ENCODE measurements at regions of chr2 and their contacts with region 1.

Region 1: DNA sequence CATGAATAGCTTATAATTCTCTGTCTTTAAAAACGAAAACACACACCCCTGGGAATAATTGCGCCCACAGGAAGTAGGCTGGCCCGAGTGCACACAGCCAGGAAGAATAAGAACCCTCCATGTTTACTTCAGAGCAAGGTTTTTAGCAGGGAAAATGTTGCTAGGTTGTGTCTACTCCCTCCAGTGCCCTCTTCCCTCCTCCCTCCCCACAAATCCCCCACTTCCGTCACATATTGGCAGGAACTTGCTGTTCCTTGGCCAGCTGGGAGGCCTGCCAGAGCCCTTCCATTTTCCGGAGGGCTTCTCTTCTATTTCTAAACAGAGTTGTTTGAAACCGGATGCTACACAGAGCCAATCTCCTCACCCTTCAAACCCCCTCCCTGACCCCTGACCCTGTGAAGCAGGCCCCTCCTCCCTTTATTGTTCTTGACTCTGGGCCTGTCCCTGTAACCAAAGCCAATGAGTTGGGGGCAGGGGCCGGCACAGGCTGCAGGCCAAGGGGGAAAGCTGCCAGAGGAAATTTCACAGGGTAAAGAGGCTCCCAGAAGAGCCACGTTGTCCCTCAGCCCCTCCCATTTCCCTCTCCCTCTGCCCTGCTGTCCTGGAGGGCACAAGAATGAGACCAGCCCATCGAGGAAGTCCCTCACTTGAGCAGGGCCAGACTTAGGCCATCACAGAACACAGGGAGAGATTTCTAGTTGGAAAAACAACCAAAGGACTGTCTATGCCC is 49.8 kb upstream of the LGALSL start:
- DNase-seq: peak; percentile 91

Region 2: GRCh38 chr2:63446658-63447057 is 957.5 kb before region 1 on chr2:
- intact Hi-C with region 1: no loop called
- DNase-seq: no peak

Region 3: DNA sequence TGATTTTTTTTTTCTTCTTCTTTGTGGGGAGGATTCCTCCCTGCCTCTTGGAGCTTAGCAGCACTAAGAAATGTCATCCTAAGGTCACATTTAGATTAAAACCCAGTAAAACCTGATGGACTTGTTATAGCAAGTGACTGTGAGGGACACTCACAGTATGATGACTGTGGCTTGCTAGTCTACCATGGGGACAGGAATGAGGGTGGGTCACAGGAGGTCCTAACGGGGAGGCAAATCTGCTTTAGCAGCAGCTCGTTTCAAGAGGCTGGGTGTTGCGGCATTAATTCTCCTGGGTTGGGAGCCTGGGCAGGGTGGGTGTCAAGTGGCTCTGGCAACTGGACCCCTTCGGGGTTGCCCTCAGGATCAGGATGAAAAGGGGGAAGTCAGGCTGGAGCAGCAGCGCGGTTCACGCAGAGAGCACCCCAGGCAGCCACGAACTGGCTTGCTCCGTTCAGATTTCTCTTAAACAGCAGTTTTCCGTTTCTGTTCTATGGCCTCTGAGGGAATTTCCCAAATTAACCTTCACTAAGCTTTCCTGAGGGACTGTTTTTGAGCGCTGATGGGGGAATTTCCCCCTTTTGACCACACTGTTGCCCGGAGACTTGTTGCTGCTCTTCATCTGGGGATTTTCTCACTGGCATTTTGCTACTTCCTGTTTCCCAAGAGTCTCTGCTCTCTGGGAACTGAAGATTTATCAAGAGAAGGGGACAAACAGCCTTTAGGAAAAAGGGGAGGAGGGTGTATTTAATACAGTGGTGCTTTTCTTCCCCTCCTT is 200.1 kb before region 1 on chr2:
- intact Hi-C with region 1: no loop called
- DNase-seq: peak; percentile 82

Region 4: DNA sequence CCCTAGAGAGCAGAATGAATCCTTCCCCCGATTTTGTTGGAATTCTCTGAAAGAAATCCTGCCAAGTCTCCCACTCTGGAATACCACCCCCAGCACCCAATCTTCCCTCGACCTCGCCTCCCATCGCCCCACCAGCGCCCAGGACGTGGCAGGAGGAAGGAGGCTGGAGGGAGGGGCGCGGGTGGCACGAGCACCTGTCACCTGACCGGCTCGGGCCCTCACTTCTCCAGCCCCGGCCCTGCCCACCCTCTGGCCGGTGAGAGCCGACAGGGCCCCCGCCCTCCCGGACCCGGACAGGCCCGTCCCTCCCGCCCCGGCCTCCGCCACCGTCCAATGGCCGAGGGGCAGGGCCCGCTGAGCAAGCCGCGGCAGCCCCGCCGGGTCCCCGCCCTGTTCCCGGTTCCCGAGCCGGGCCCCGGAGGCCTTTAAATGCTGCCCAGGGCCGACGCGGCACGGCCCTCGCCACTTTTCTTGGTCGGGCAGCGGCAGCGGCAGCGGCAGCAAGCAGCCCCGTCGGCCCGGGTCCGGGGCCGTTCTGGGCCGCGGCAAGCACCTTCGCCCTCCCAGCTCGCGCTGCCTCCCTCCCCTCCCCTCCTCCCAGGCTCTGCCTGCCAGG is 49.7 kb after region 1 on chr2 and contains the start of gene LGALSL:
- intact Hi-C with region 1: loop called (anchors 1 kb)
- DNase-seq: peak; percentile 88
- total RNA-seq, gene LGALSL: 13.1 TPM

Region 5: GRCh38 chr2:64819774-64820696 is 415.9 kb after region 1 on chr2:
- intact Hi-C with region 1: no loop called
- DNase-seq: no peak

Measured in cardiac septum (tissue), 1 donor.